CD4-positive, alpha-beta memory T cell (primary cell): ENCODE measurements at regions of chr19 and their contacts with region 1.

Region 1: GRCh38 chr19:40139533-40140287 is 49.0 kb upstream of the ZNF780A start:
- DNase-seq: peak in 4 of 5 donors; percentile 51 to 59 (median 56)
- H3K4me3 ChIP-seq: no peak overlapping the region
- H3K4me3 Mint-ChIP-seq: peak overlapping the region in 1 of 8 donors; percentile 39
- H3K27ac ChIP-seq: no peak overlapping the region
- H3K27ac Mint-ChIP-seq: peak overlapping the region in 3 of 7 donors; percentile 18 to 52 (median 29)
- H3K4me1 ChIP-seq: peaks cover 24% of the 10 kb centered on the region
- H3K4me1 Mint-ChIP-seq: peaks cover 12 to 29% (median 21%) of the 10 kb centered on the region in 4 donors
- H3K27me3 ChIP-seq: no peaks in the 10 kb centered on the region
- H3K27me3 Mint-ChIP-seq: peaks cover 2 to 5% of the 10 kb centered on the region in 2 donors

Region 2: GRCh38 chr19:39792999-39793546 is 346.6 kb before region 1 on chr19:
- CTCF ChIA-PET with region 1: no interaction called
- POLR2A ChIA-PET with region 1: no interaction called
- intact Hi-C with region 1: loop called (anchors 1 kb)
- DNase-seq: peak; percentile 67 to 78 (median 69)
- H3K4me3 ChIP-seq: peak overlapping the region; percentile 63 to 73
- H3K4me3 Mint-ChIP-seq: peak overlapping the region; percentile 71 to 85 (median 80)
- H3K27ac ChIP-seq: no peak overlapping the region
- H3K27ac Mint-ChIP-seq: peak overlapping the region in 2 of 7 donors; percentile 19 to 69
- H3K4me1 ChIP-seq: peaks cover 3% of the 10 kb centered on the region
- H3K4me1 Mint-ChIP-seq: peaks cover 0 to 5% (median 2%) of the 10 kb centered on the region in 4 donors
- H3K27me3 ChIP-seq: no peaks in the 10 kb centered on the region
- H3K27me3 Mint-ChIP-seq: peaks cover 0 to 9% of the 10 kb centered on the region in 2 donors

Region 3: DNA sequence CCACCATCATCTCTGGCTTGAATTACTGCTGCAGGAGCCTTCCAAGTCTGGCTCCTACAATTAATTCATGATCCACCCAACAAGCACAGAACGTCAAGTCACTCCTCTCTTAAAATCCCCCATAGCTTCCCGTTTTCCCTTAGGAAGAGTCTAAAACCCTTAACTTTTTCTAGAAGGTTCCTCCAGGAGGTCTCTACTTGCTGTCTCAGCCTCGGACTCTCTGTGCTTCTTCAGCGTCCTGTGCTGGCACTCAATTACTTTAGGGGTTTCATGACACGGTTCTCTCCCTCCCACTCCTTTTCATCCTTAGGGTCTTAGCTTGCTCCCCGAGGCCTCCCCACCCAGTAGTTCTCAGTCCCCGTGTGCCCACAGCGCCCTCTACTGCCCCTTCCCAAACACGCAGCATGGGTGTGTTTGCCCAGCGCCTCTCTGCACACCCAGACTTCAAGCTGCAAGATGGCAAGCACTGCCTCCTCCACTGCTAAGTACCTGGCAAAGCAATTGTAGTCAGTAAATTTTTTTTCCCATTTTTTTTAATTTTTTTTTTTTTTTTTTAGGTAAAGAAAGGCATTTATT is 25.7 kb after region 1 on chr19:
- CTCF ChIA-PET with region 1: interaction called, 45 read pairs
- POLR2A ChIA-PET with region 1: interaction called, 6 read pairs
- intact Hi-C with region 1: loop called (anchors 1 kb)
- DNase-seq: peak in 4 of 5 donors; percentile 21 to 51 (median 41)
- H3K4me3 ChIP-seq: no peak overlapping the region
- H3K4me3 Mint-ChIP-seq: peak overlapping the region in 1 of 8 donors; percentile 0
- H3K27ac ChIP-seq: no peak overlapping the region
- H3K27ac Mint-ChIP-seq: peak overlapping the region in 5 of 7 donors; percentile 38 to 79 (median 66)
- H3K4me1 ChIP-seq: peaks cover 6% of the 10 kb centered on the region
- H3K4me1 Mint-ChIP-seq: peaks cover 10 to 23% (median 16%) of the 10 kb centered on the region in 4 donors
- H3K27me3 ChIP-seq: no peaks in the 10 kb centered on the region
- H3K27me3 Mint-ChIP-seq: peaks cover 0 to 2% of the 10 kb centered on the region in 2 donors

Region 4: GRCh38 chr19:40221858-40222837 is 82.4 kb after region 1 on chr19:
- CTCF ChIA-PET with region 1: interaction called, 12 read pairs
- POLR2A ChIA-PET with region 1: no interaction called
- intact Hi-C with region 1: loop called (anchors 1 kb)
- DNase-seq: peak; percentile 80 to 84 (median 82)
- H3K4me3 ChIP-seq: no peak overlapping the region
- H3K4me3 Mint-ChIP-seq: peak overlapping the region; percentile 3 to 86 (median 35)
- H3K27ac ChIP-seq: no peak overlapping the region
- H3K27ac Mint-ChIP-seq: peak overlapping the region in 6 of 7 donors; percentile 19 to 92 (median 58)
- H3K4me1 ChIP-seq: peaks cover 26% of the 10 kb centered on the region
- H3K4me1 Mint-ChIP-seq: peaks cover 13 to 22% (median 15%) of the 10 kb centered on the region in 4 donors
- H3K27me3 ChIP-seq: peaks cover 34% of the 10 kb centered on the region
- H3K27me3 Mint-ChIP-seq: peaks cover 46 to 47% of the 10 kb centered on the region in 2 donors

Region 5: GRCh38 chr19:40633207-40633606 is 493.5 kb after region 1 on chr19:
- CTCF ChIA-PET with region 1: interaction called, 12 read pairs
- POLR2A ChIA-PET with region 1: no interaction called
- intact Hi-C with region 1: loop called (anchors 1 kb)
- DNase-seq: no peak
- H3K4me3 ChIP-seq: no peak overlapping the region
- H3K4me3 Mint-ChIP-seq: no peak overlapping the region
- H3K27ac ChIP-seq: no peak overlapping the region
- H3K27ac Mint-ChIP-seq: no peak overlapping the region
- H3K4me1 ChIP-seq: peaks cover 6% of the 10 kb centered on the region
- H3K4me1 Mint-ChIP-seq: peaks cover 4 to 14% (median 7%) of the 10 kb centered on the region in 4 donors
- H3K27me3 ChIP-seq: no peaks in the 10 kb centered on the region
- H3K27me3 Mint-ChIP-seq: peaks cover 0 to 2% of the 10 kb centered on the region in 2 donors